ENCODE measurements at regions of chr3 and their contacts with region 1.

Region 1: DNA sequence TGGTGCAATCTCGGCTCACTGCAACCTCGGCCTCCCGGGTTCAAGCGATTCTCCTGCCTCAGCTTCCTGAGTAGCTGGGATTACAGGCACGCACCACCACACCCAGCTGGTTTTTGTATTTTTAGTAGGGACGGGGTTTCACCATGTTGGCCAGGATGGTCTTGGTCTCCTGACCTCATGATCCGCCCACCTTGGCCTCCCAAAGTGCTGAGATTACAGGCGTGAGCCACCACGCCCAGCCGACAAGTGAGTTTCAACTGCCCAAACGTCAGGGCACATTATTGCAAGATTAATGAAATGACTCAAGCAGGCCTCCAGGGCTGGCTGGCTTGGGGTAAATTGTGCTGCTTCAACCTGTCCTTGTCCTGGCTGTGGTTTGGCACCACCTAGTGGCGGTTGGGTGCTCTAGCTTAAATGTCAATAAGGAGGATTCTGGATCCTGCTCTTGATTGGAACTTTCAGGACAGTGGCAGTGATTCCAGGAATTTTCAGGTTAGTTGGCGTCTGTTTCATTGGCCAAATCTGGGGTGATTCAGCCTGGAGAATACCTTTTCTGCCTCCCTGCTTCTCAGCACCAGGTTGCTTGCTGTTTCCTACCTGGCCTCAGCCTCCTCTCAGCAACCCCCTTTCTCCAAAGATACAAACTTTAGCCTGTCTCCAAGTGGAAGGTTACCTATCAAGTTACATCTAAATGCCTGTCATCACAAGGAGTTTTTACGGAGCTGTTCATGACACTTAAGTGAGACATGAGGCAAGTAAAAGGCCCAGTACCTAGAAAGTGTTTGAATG is 32.4 kb upstream of the SACM1L start:
- DNase-seq: peak; percentile 87 to 91
- ATAC-seq: peak; percentile 81 to 94 (median 85)
- H3K4me3 ChIP-seq: no peak overlapping the region
- H3K27ac ChIP-seq: peak overlapping the region in 3 of 10 donors; percentile 11 to 51 (median 31)
- H3K4me1 ChIP-seq: peaks cover 2 to 63% (median 52%) of the 10 kb centered on the region in 9 donors
- H3K27me3 ChIP-seq: no peaks in the 10 kb centered on the region
- CTCF ChIP-seq: peak; percentile 87 to 97 (median 93)

Region 2: GRCh38 chr3:45037734-45038455 is 618.9 kb before region 1 on chr3:
- intact Hi-C with region 1: loop called in 4 of 10 experiments (anchors 10 kb)
- DNase-seq: peak; percentile 86 to 93
- ATAC-seq: peak; percentile 63 to 86 (median 82)
- H3K4me3 ChIP-seq: peak overlapping the region in 2 of 10 donors; percentile 24 to 26
- H3K27ac ChIP-seq: peak overlapping the region in 5 of 10 donors; percentile 25 to 62 (median 32)
- H3K4me1 ChIP-seq: peaks cover 3 to 62% (median 33%) of the 10 kb centered on the region in 9 donors
- H3K27me3 ChIP-seq: no peaks in the 10 kb centered on the region
- CTCF ChIP-seq: peak; percentile 80 to 94 (median 89)

Region 3: DNA sequence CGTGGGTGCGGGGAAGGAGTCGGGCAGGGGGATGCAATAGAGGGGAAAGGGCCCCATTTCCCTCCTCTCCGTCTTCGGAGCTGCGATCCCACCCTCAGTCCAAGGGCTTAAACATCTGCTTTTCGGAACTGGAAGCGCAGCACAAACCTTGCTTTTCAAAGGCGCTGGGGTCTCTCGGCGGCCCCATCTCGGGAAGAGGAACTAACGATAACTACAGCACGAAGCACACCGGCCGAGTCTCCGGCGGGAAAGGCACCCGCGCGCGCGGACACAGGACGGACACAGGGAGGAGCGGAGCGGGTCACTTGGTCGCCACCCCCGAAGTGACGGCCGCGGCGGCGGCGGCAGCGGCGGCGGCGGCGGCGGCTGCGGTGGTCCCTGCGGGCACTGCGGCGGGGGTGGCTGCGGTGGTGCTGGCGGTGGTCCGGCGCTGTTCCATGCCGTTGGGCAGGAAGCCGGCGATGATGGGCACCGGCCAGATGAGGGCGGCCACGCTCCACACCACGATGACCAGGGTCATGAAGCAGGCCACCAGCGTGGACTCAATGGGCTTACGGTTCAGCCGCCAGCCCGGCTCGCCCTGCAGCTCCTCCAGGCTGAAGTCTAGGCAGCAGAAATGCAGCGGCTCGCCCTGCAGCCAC is 431.8 kb before region 1 on chr3:
- intact Hi-C with region 1: loop called in 1 of 10 experiments (anchors 10 kb)
- DNase-seq: peak; percentile 63 to 75
- ATAC-seq: peak; percentile 73 to 87 (median 81)
- H3K4me3 ChIP-seq: peak overlapping the region in 9 of 10 donors; percentile 34 to 55 (median 48)
- H3K27ac ChIP-seq: peak overlapping the region in 1 of 10 donors; percentile 1
- H3K4me1 ChIP-seq: peaks cover 0 to 14% (median 8%) of the 10 kb centered on the region in 9 donors
- H3K27me3 ChIP-seq: peaks cover 0 to 84% (median 65%) of the 10 kb centered on the region in 7 donors
- CTCF ChIP-seq: peak; percentile 26 to 58 (median 54)

Region 4: DNA sequence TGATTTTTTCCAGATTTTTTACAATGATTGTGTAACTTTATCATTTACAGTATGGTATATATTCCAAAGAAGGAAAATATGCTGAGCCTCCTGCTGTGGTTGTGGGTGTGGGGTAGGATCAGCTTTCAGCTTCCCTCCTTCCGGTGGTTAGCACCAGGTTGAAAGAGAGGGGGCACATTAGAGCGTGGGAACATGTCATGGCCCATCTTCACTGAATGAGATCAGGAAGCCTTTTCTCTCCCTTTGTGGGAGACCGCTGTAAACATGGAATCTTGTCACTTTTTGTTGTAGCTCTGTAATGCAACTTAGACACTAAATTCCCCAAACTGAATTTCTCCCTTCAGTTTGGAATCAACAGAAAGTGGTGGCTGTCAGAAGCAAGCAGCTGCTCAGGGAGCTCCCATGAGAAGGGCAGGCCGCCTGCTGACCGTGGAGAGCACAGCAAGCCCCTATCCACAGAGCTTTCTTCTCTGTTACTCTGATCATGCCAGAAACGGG is 148.9 kb before region 1 on chr3:
- intact Hi-C with region 1: loop called (anchors 1 to 5 kb)
- DNase-seq: peak; percentile 40 to 41
- ATAC-seq: peak in 7 of 8 donors; percentile 46 to 75 (median 67)
- H3K4me3 ChIP-seq: no peak overlapping the region
- H3K27ac ChIP-seq: peak overlapping the region in 7 of 10 donors; percentile 18 to 64 (median 32)
- H3K4me1 ChIP-seq: peaks cover 0 to 22% (median 13%) of the 10 kb centered on the region in 9 donors
- H3K27me3 ChIP-seq: no peaks in the 10 kb centered on the region
- CTCF ChIP-seq: peak in 6 of 9 donors; percentile 31 to 53 (median 42)

Region 5: GRCh38 chr3:45516829-45517228 is 139.9 kb before region 1 on chr3:
- intact Hi-C with region 1: loop called in 4 of 10 experiments (anchors 1 to 5 kb)
- DNase-seq: no peak
- ATAC-seq: peak in 1 of 8 donors; percentile 22
- H3K4me3 ChIP-seq: no peak overlapping the region
- H3K27ac ChIP-seq: peak overlapping the region in 2 of 10 donors; percentile 29 to 54
- H3K4me1 ChIP-seq: peaks cover 0 to 15% (median 5%) of the 10 kb centered on the region in 9 donors
- H3K27me3 ChIP-seq: no peaks in the 10 kb centered on the region
- CTCF ChIP-seq: no peak

Region 6: DNA sequence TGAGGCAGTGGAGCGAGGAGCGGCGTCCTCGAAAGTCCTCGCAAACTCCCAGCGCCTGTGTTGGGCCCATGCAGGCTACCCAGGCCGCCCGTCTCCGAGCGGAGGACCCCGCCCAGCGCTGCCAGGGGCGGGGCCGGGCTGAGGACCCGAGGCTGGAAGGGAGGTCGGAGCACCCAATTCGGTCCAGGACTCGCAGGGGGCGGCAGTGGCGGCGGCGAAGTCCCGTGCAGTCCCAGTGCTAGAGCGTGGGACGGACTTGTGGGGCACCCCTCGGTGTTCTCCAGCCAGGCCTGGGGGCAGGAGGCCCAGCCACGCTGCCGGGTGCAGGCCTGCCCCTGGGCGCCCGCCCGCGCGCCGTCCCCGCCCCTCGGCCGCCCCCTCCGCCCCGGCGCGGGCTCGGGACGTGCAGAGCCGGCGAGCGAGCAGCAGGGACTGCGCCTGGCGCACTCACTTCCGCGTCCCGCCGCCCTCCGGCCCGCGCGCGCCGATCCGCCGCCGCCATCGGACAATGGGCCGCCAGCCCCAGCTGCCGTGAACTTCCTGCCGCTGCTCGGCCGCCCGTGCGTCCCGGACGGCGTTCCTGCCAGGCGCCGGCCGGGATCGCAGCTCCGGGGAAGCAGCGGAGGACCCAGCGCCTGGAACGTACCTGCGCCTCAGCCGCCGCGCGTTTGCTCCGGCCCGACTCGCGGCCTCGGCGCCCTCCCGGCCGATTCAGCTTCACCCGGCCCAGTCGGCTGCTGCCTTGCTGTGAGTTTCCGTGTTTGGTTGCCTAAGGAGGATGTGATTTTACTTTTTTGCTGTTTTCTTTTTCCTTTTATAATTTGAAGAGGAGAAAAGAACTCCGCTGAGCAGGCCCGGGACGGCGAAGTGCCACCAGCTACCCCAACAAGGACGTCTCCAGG is 62.8 kb before region 1 on chr3:
- intact Hi-C with region 1: loop called (anchors 1 to 5 kb)
- DNase-seq: peak; percentile 63 to 82
- ATAC-seq: peak; percentile 65 to 91 (median 82)
- H3K4me3 ChIP-seq: peak overlapping the region; percentile 68 to 89 (median 80)
- H3K27ac ChIP-seq: peak overlapping the region; percentile 62 to 99 (median 93)
- H3K4me1 ChIP-seq: peaks cover 26 to 59% (median 54%) of the 10 kb centered on the region in 9 donors
- H3K27me3 ChIP-seq: no peaks in the 10 kb centered on the region
- CTCF ChIP-seq: peak in 1 of 9 donors; percentile 5

Region 7: DNA sequence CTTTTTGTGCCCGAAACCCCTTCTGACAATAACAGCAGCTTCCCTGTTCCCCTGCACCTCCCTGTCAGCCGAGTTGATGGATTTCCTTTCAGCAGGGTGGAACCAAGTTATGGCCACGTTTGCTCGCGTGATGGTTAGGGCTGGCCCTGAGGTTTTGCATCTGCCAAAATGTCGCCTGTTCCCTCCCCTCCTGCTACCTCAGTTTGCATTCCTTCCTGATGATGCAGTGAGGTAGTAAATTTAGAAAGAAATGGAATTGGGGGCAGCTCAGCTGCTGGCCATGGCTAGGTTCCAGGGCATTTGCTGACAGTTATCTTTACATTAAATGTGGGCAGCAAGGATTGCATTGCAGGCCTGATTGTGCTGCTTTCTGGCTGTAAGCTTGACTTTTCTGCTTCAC is 49.0 kb before region 1 on chr3:
- intact Hi-C with region 1: loop called in 1 of 10 experiments (anchors 5 kb)
- DNase-seq: peak in 1 of 2 donors; percentile 50
- ATAC-seq: peak in 7 of 8 donors; percentile 30 to 76 (median 65)
- H3K4me3 ChIP-seq: peak overlapping the region in 3 of 10 donors; percentile 0 to 21 (median 11)
- H3K27ac ChIP-seq: peak overlapping the region; percentile 53 to 91 (median 86)
- H3K4me1 ChIP-seq: peaks cover 39 to 100% (median 94%) of the 10 kb centered on the region in 9 donors
- H3K27me3 ChIP-seq: no peaks in the 10 kb centered on the region
- CTCF ChIP-seq: no peak

Measured in heart right ventricle (tissue), 16 donors.